ENCODE measurements at regions of chr2 and their contacts with region 1.

Region 1: GRCh38 chr2:100381240-100381639 is 36.2 kb downstream of the CHST10 start:
- DNase-seq: peak; percentile 51 to 95 (median 86)

Region 2: GRCh38 chr2:99569386-99569785 is 811.9 kb before region 1 on chr2:
- intact Hi-C with region 1: loop called (anchors 10 kb)
- DNase-seq: no peak

Region 3: GRCh38 chr2:100262555-100263320 is 118.5 kb before region 1 on chr2:
- intact Hi-C with region 1: loop called (anchors 5 kb)
- DNase-seq: peak; percentile 28 to 91 (median 83)

Measured in head of caudate nucleus (tissue), 42 donors.